Mammary epithelial cell (primary cell): ENCODE measurements at regions of chr11 and their contacts with region 1.

Region 1: GRCh38 chr11:79052544-79052943 is 388.3 kb downstream of the TENM4 start:
- DNase-seq: no peak
- H3K4me3 ChIP-seq: no peak overlapping the region
- H3K27ac ChIP-seq: no peak overlapping the region
- H3K4me1 ChIP-seq: no peaks in the 10 kb centered on the region
- H3K27me3 ChIP-seq: no peaks in the 10 kb centered on the region
- CTCF ChIP-seq: peak in 1 of 2 donors; percentile 25

Region 2: GRCh38 chr11:78325274-78325781 is 727.2 kb before region 1 on chr11:
- CTCF ChIA-PET with region 1: no interaction called
- dilution Hi-C with region 1: no loop called
- in situ Hi-C with region 1: no loop called
- intact Hi-C with region 1: no loop called
- DNase-seq: no peak
- H3K4me3 ChIP-seq: no peak overlapping the region
- H3K27ac ChIP-seq: no peak overlapping the region
- H3K4me1 ChIP-seq: no peaks in the 10 kb centered on the region
- H3K27me3 ChIP-seq: no peaks in the 10 kb centered on the region
- CTCF ChIP-seq: no peak

Region 3: DNA sequence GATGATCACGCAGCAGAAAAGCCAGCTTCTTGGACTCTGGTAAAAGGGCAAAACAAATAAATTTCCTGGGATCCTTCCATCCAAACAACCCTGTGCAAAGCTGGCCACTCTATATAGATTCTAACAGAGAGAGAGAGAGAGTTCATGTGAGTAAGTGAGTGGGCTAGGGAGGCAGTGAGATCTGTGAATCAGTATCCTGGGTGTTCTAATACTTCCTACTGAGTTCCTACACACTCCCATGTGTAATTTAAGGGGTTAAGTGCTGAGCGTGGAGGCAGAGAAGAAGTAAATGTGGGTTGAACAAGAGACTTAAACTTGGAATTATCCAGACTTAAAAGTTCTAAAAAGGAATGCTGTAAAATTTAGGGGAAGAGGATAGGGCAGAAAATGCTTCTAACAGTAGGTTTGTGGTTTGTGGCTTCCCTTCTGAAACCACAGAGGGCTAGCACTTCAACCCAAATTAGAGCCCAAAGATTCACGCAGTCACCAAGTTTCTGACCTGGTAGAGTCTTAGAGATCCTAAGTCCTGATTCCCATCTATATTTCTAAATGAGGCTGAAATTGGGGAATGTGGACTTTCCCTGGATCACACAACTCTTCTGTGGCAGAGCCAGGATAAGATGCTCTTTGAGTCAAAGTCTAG is 25.6 kb before region 1 on chr11:
- CTCF ChIA-PET with region 1: interaction called, 35 read pairs
- dilution Hi-C with region 1: no loop called
- in situ Hi-C with region 1: no loop called
- intact Hi-C with region 1: no loop called
- DNase-seq: no peak
- H3K4me3 ChIP-seq: no peak overlapping the region
- H3K27ac ChIP-seq: no peak overlapping the region
- H3K4me1 ChIP-seq: no peaks in the 10 kb centered on the region
- H3K27me3 ChIP-seq: no peaks in the 10 kb centered on the region
- CTCF ChIP-seq: no peak

Region 4: GRCh38 chr11:79035881-79036280 is 16.7 kb before region 1 on chr11:
- CTCF ChIA-PET with region 1: interaction called, 28 read pairs
- dilution Hi-C with region 1: no loop called
- in situ Hi-C with region 1: no loop called
- intact Hi-C with region 1: no loop called
- DNase-seq: no peak
- H3K4me3 ChIP-seq: no peak overlapping the region
- H3K27ac ChIP-seq: no peak overlapping the region
- H3K4me1 ChIP-seq: no peaks in the 10 kb centered on the region
- H3K27me3 ChIP-seq: no peaks in the 10 kb centered on the region
- CTCF ChIP-seq: no peak